Caki2 (cell line): ENCODE measurements at regions of chr22 and their contacts with region 1.

Region 1: DNA sequence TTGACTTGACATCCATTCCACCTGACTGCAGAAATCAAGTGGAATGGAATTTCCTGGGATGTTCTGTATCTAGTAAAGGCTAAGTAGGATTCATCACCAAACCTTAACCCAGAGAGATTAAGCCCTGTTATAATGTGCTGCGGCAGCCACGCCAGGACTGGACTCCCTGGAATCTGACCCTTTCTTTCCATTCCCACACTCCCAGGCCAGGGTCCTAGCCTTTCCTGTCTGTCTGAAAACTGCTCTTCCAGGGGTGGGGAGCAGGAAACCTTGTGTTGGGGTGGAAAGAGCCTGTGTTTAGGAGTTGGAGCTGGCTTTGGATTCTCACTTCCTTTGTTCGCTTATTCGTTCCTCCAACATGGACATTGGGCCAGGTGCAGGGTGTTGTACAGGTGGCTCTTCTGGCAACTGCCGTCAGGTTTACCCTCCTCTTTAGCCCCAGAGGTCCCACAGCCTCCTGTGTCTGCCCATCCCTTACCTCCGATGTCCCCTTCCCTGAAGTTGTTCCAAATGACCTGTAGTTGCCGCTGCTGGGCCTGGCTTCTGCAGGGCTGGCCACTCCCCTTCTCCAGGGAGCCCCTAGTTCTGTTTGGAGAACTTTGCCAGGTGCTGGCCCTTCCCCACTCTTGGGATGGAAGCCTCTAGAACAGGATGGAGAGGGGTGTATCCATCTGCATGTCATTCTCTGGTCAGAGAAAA is 20.5 kb upstream of the PARVB start:
- DNase-seq: no peak

Region 2: DNA sequence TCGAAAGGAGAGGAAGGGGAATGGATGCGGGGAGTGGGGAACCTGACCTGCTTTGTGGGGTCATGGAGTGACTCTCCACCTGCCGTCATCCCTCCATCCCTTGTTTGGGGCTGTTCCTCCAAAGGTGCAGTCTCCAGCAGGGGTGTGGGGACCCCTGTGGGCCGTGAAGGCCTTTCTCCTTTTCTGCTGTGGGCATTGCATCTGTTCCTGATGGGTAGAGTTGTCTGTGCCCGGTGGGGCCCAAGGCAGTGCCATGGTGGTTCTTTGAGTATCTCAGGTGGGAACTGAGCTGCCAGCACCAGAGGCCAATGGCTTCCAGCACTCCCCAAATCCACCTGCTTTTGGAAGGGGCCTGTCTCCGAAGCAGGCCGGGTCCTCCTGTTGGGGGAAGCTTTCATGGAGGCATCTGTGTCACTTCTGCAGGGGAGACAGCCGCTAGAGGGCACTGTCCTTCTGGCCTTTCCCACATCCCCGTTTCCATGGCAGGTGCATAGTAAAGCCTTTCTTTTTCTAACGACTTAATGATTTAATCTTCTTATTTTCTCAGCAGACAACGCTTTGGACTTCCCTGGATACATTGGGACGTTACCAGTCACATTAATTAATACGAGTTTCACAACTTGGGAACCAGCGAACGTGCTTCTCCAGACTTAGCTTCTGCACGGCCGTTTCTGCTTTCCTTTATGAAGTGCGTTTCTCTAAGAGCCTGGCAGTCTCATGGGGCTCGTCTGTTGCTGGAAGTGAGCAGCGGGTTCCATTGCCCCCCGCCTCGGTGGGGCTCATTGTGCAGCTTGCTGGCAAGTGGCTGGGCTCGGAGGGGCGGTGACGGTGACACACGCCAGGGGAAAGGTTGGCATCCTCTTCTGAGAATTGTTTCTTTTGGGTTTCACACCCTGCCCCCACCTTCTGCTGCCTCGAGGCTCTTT is 77.6 kb after region 1 on chr22:
- in situ Hi-C with region 1: loop called (anchors 10 kb)
- DNase-seq: peak; percentile 50